ENCODE measurements at regions of chr12 and their contacts with region 1.

Region 1: DNA sequence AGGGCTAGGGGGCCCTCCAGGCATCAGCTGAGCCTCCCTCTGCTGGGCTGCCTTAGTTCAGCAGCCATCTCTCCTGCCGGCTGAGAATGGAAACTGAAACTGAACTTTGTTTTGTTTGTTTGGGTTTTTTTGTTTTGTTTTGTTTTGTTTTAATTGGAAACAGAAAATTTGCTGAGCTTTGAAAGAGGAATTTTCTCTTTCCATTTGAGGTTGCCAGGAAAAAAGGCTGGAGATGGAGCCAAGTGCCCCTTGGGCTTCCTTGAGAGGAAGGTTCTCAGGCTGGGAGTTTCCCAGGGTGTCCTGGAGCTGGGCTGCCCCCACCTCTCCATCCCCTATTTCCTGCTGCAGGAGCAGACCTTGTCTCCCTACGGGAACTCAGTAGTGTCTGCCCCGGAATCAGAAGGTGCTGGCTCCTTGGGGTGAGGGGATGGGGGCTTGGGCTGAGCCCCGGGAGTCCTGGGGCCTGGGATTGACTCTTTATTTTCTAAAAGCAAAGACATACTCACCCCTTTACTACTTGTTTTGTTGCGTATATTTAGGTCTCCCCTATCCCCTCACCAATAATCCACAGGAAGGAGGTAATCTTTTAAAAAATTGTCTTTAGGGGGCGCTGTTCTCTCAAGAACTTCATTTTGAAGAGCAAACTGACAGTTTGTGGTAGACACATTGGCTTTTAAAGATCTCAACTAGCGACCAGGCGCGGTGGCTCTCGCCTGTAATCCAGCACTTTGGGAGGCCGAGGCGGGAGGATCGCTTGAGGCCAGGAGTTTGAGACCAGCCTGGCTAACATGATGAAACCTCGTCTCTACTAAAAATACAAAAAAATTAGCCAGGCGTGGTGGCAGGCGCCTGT is 21.3 kb upstream of the OASL start:
- DNase-seq: no peak
- H3K4me3 ChIP-seq: peak overlapping the region; percentile 22; the same call in 1 of the 2 replicates
- H3K27me3 ChIP-seq: no peaks in the 10 kb centered on the region
- CTCF ChIP-seq: peak; percentile 71

Region 2: DNA sequence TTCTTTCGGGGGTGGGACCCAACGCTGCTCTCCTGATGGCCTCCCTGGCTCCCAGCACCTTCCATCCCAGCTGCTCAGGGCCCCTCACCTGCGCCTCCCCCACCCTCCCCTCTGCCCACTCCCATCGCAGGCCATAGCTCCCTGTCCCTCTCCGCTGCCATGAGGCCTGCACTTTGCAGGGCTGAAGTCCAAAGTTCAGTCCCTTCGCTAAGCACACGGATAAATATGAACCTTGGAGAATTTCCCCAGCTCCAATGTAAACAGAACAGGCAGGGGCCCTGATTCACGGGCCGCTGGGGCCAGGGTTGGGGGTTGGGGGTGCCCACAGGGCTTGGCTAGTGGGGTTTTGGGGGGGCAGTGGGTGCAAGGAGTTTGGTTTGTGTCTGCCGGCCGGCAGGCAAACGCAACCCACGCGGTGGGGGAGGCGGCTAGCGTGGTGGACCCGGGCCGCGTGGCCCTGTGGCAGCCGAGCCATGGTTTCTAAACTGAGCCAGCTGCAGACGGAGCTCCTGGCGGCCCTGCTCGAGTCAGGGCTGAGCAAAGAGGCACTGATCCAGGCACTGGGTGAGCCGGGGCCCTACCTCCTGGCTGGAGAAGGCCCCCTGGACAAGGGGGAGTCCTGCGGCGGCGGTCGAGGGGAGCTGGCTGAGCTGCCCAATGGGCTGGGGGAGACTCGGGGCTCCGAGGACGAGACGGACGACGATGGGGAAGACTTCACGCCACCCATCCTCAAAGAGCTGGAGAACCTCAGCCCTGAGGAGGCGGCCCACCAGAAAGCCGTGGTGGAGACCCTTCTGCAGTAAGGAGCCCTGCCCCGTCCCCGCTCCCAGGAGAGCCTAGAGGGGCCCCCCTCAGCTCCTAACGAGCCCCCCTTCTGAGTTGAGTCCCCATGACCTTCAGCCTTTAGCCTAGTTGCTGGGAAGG is 81.8 kb before region 1 on chr12 and contains the start of gene HNF1A:
- CTCF ChIA-PET with region 1: no interaction called
- POLR2A ChIA-PET with region 1: no interaction called
- DNase-seq: no peak
- H3K4me3 ChIP-seq: no peak within 1 kb of the TSS
- H3K27me3 ChIP-seq: no peaks in the 10 kb centered on the region
- CTCF ChIP-seq: no peak
- polyA plus RNA-seq, gene HNF1A: not detected in 2 replicates

Region 3: DNA sequence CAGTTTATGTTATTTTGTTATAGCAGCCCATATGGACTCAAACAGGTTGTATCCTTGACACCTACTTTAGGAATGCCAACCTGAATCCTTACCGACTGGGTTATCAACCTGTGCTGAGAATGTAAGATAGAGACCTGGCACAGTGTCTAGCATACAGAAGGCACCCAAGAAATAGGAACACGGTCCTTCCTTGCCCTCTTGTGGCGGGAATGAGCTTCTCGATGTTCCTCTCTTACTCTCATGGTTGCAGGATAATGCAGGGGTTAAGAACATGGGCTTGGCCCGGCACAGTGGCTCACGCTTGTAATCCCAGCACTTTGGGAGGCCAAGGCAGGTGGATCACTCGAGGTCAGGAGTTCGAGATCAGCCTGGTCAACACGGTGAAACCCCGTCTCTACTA is 50.6 kb before region 1 on chr12:
- CTCF ChIA-PET with region 1: no interaction called
- POLR2A ChIA-PET with region 1: no interaction called
- DNase-seq: no peak
- H3K4me3 ChIP-seq: no peak overlapping the region
- H3K27me3 ChIP-seq: no peaks in the 10 kb centered on the region
- CTCF ChIP-seq: peak; percentile 54

Region 4: DNA sequence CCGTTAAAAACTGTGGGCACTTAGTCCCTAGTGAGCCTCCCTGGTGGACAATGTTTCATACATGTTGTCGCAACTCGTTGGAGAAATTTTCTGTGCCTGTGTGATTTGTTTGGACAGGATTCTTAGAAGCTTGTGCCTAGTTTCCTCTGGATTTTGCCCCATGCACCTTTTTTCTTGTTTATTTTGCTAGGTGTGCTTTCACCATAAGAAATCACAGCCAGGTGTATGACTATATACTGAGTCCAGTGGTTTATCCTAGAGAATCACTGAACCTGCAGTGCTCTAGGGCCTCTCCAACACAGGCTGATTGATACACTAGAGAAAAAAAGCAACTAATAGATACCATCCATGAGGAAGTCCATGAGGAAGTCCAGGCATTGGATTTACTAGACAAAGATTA is 11.8 kb after region 1 on chr12:
- CTCF ChIA-PET with region 1: interaction called, 18 read pairs
- POLR2A ChIA-PET with region 1: no interaction called
- DNase-seq: no peak
- H3K4me3 ChIP-seq: no peak overlapping the region
- H3K27me3 ChIP-seq: no peaks in the 10 kb centered on the region
- CTCF ChIP-seq: no peak

Region 5: GRCh38 chr12:121095544-121096198 is 35.3 kb after region 1 on chr12:
- CTCF ChIA-PET with region 1: interaction called, 33 read pairs
- POLR2A ChIA-PET with region 1: no interaction called
- DNase-seq: no peak
- H3K4me3 ChIP-seq: peak overlapping the region; percentile 42
- H3K27me3 ChIP-seq: peaks cover 1% of the 10 kb centered on the region; the same call in 1 of the 2 replicates
- CTCF ChIP-seq: peak; percentile 95

Region 6: GRCh38 chr12:121223292-121224285 is 163.2 kb after region 1 on chr12:
- CTCF ChIA-PET with region 1: interaction called, 12 read pairs
- POLR2A ChIA-PET with region 1: no interaction called
- DNase-seq: no peak
- H3K4me3 ChIP-seq: no peak overlapping the region
- H3K27me3 ChIP-seq: no peaks in the 10 kb centered on the region
- CTCF ChIP-seq: peak; percentile 23; the same call in 1 of the 2 replicates